Transverse colon (tissue), 4 donors: ENCODE measurements at regions of chr11 and their contacts with region 1.

Region 1: DNA sequence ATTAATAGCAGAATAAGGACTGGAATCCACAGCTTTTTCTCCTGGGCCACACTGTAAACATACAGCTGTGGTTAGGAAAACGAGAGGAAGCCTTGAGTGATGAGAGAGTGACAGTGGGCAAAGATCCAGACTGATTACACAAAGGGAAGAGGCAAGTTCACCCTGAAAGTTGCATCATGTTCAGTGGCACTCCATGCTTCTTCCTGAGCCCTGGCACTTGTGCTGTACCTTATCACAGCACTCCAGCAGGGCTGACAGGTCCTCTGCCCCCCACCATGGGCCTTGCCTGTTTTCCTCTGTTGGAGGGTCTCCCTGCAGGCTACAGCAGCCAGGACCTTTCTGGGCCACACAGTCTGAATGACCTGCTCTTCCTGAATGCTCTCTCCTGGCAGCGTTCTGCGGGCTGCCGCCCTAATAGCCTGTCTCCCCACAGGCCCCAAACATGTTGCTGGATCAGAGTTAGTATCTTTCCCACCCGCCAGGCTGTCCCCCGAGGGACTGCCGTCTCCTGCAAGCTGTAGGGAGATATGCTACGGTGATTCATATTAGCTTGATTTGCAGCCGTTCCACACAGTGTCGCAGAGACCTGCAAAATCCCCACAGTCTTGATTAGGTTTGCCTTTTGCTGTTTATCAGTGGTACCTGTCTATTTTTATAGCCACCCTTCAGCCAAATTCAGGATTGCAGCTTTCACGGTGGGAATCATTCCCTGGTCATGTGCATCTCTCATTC is 60.2 kb downstream of the NTM start:
- DNase-seq: no peak
- H3K4me3 ChIP-seq: no peak overlapping the region
- H3K27ac ChIP-seq: no peak overlapping the region
- H3K4me1 ChIP-seq: no peaks in the 10 kb centered on the region
- H3K27me3 ChIP-seq: no peaks in the 10 kb centered on the region
- CTCF ChIP-seq: no peak
- EP300 ChIP-seq: no peak
- POLR2A ChIP-seq: no peak

Region 2: DNA sequence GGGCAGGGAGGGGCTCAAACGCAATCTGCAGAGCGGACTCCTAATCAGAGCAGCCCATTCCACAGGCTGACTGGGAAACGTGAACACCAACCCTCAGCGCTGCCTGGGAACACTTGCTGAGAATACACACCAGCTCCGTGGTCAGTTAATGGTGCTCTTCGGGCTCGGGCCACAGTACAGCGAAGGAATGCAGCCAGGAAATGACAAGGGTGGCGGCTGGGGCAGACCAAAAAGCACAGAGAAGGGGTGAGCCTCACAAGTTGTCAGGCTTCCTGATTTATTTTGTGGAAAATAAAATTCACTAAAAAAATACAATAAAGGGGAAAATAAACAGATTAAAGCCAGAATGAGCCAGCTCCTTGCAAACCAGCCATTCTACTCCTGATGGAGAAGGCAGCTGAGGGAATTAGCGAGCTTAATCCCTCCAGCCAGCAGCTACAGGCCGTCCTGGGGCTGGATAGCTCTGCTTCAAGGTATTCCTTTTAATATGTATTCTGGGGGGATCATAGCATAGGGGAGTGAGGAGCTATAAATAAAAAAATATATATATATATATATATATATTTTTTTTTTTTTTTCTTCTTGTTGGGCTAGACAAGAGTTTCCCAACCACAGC is 225.8 kb before region 1 on chr11:
- in situ Hi-C with region 1: no loop called
- intact Hi-C with region 1: no loop called
- DNase-seq: no peak
- H3K4me3 ChIP-seq: no peak overlapping the region
- H3K27ac ChIP-seq: no peak overlapping the region
- H3K4me1 ChIP-seq: no peaks in the 10 kb centered on the region
- H3K27me3 ChIP-seq: no peaks in the 10 kb centered on the region
- CTCF ChIP-seq: no peak
- EP300 ChIP-seq: no peak
- POLR2A ChIP-seq: no peak

Region 3: DNA sequence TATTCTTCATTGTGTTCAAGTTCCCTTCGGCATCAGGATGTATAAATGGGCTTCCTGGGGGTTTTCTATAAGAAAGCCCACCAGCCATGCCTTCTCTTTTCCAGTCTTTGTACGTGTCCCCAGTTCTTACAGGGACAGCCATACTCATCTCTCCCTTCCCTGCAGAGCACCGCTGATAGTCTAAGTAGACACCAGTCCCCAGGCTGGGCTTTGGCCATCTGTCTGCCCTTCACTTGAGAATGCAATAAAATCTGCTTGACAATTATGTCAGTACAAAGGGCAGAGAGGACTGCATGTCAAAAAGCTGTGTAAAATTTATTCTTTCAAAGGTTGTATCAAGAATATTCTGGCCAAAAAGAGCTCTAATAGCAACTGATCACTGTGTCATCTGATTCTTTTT is 33.0 kb before region 1 on chr11:
- in situ Hi-C with region 1: no loop called
- intact Hi-C with region 1: loop called (anchors 5 kb)
- DNase-seq: no peak
- H3K4me3 ChIP-seq: no peak overlapping the region
- H3K27ac ChIP-seq: no peak overlapping the region
- H3K4me1 ChIP-seq: no peaks in the 10 kb centered on the region
- H3K27me3 ChIP-seq: no peaks in the 10 kb centered on the region
- CTCF ChIP-seq: no peak
- EP300 ChIP-seq: no peak
- POLR2A ChIP-seq: no peak

Region 4: DNA sequence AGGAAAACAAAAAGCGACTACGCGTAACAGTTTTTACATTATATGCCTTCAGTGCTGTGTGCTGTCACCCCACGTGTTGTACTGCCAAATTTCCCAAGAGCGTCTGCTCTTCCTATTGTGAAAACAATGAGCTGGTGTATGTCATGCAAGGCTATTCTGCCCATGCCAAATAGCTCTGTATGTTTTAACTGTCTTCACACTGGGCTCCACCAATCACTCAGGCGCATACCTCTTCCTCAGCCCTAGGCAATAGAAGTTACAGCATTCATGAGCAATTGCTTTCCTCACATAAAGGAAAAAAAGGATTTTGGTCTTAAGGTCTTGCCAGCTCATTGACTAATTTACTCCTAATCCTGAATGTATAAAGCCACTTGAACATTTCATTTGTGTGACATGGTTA is 546.6 kb after region 1 on chr11:
- in situ Hi-C with region 1: no loop called
- intact Hi-C with region 1: no loop called
- DNase-seq: no peak
- H3K4me3 ChIP-seq: no peak overlapping the region
- H3K27ac ChIP-seq: no peak overlapping the region
- H3K4me1 ChIP-seq: no peaks in the 10 kb centered on the region
- H3K27me3 ChIP-seq: no peaks in the 10 kb centered on the region
- CTCF ChIP-seq: no peak
- EP300 ChIP-seq: no peak
- POLR2A ChIP-seq: no peak